ENCODE measurements at regions of chr11 and their contacts with region 1.

Region 1: DNA sequence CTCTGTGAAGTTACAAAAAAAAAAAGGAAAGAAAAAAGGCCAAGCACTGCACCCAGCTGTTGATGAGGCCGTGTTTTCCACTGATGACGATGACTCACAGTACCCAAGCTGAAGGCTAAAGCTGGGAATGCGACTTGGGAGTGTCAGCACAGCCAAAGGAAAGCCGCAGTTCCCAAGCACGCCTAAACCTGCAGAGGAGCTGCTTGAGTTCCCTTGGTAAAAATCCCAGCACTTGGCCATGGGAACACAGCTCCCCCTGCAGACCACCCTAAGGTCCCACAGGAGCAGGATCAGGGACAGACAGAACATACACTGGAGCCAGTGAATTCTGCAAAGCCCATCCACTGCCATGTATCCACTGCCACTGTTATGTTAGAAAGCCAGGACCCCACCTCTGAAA is 39.9 kb downstream of the SERGEF start:
- H3K4me3 ChIP-seq: no peak overlapping the region
- H3K27ac ChIP-seq: no peak overlapping the region
- H3K4me1 ChIP-seq: no peaks in the 10 kb centered on the region
- CTCF ChIP-seq: peak; percentile 36; the same call in 1 of the 2 replicates

Region 2: GRCh38 chr11:17743808-17744119 is 229.2 kb before region 1 on chr11:
- CTCF ChIA-PET with region 1: interaction called, 19 read pairs
- POLR2A ChIA-PET with region 1: no interaction called
- H3K4me3 ChIP-seq: no peak overlapping the region
- H3K27ac ChIP-seq: no peak overlapping the region
- H3K4me1 ChIP-seq: no peaks in the 10 kb centered on the region
- CTCF ChIP-seq: no peak

Region 3: DNA sequence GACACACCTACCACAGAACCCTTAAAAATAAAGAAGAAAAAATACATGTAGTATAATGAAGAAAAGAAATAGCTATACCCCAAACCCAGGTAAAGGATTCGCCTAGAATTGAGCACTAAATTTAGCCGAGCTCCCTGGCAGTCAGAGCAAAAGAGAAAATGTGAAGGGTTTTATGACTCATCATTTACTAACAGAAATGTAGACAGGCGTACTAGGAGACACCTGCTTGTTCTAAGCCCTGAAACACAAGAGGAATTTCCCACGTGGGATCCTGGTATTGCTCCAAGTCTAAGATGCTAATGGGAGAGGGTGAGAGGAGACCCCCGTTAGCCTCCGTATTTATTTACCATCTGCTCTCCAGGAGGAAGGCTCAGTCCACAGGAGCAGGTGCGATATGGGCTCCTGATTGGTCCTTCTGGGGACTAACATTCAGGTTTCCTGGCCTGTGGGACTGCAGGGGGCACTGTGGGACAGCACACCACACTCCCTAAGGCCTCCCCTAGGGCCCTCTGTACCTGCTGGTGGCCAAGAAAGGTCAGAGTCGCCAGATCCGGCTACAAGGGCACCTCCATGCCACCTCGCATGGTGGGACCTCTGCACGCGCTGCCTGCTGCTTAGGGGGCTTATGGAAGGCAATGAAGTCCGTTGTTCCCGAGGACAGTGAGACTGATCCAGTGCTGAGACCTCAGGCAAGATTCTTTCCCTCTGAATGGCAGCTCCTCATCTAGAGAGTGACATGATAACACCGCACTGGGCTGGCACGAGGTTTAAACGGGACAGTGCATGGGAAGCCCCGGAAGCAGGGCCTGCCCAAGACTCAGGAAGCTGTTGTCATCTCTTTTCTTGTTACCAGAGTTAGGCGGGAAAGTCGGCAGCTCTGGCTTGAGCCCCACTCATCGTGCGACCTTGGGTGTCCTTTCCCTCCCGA is 212.6 kb before region 1 on chr11:
- CTCF ChIA-PET with region 1: interaction called, 46 read pairs
- POLR2A ChIA-PET with region 1: no interaction called
- H3K4me3 ChIP-seq: no peak overlapping the region
- H3K27ac ChIP-seq: no peak overlapping the region
- H3K4me1 ChIP-seq: no peaks in the 10 kb centered on the region
- CTCF ChIP-seq: no peak

Region 4: GRCh38 chr11:17770048-17770652 is 202.8 kb before region 1 on chr11:
- CTCF ChIA-PET with region 1: interaction called, 15 read pairs
- POLR2A ChIA-PET with region 1: no interaction called
- H3K4me3 ChIP-seq: no peak overlapping the region
- H3K27ac ChIP-seq: no peak overlapping the region
- H3K4me1 ChIP-seq: no peaks in the 10 kb centered on the region
- CTCF ChIP-seq: no peak

Region 5: GRCh38 chr11:17906436-17906835 is 66.6 kb before region 1 on chr11:
- CTCF ChIA-PET with region 1: interaction called, 17 read pairs
- POLR2A ChIA-PET with region 1: no interaction called
- H3K4me3 ChIP-seq: no peak overlapping the region
- H3K27ac ChIP-seq: no peak overlapping the region
- H3K4me1 ChIP-seq: no peaks in the 10 kb centered on the region
- CTCF ChIP-seq: no peak

Region 6: DNA sequence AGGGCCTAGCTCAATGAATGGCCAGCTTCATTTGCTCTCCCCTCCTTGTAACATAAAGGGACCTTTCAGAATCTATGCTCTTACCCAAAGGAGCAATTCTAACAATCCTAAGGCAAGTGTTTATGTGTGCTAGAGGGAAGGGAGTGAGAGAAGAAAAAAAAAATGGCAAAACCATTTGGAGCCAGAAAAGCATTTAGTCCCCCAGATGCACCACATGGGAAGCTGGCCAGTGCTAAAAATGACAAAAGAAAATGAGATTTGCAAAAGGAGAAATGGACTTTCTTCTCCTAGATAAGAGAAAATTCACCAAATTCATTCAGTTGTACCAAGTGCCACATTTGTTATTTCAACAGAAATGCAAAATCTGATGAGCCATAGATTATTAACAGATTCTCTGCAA is 12.9 kb before region 1 on chr11:
- CTCF ChIA-PET with region 1: interaction called, 37 read pairs
- POLR2A ChIA-PET with region 1: no interaction called
- H3K4me3 ChIP-seq: no peak overlapping the region
- H3K27ac ChIP-seq: no peak overlapping the region
- H3K4me1 ChIP-seq: no peaks in the 10 kb centered on the region
- CTCF ChIP-seq: no peak

Region 7: DNA sequence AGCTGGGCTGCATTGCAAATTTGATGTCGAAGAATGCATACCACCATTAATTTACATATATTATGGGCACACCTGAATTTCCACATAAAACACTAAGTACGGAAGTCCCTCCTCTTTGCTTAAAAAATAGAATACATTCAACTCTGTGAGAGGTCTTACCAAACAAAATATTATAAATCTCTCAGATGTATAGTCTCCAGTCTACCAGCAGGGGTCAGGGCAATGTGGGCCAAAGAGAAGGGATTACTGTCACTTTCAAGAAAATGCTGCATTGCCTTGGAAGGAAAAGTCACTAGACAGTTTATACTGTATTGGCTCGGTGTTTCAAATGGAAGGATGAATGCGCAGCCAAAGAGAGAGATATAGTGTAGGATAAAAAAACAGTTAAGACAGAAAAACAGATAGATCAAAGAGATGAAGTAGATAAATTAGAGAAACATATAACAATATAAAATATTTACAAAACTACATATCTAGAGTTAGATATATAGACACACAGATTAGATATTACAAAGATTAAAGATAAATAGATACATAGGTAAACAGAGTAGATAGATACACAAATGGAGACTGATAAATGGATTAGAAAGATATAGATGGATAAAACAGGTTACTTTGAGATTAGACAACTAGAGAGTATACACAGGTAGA is 18.9 kb after region 1 on chr11:
- CTCF ChIA-PET with region 1: interaction called, 34 read pairs
- POLR2A ChIA-PET with region 1: no interaction called
- H3K4me3 ChIP-seq: no peak overlapping the region
- H3K27ac ChIP-seq: no peak overlapping the region
- H3K4me1 ChIP-seq: no peaks in the 10 kb centered on the region
- CTCF ChIP-seq: 0 out of 2 replicates have a peak, but pooled peaks have one; percentile 27

Measured in HEK293 (cell line).